Activated B cell treated with CpG ODN at 0.5 μM for 24 hours (primary cell): ENCODE measurements at regions of chr1 and their contacts with region 1.

Region 1: GRCh38 chr1:76154206-76154956 is 79.8 kb downstream of the ST6GALNAC3 start:
- DNase-seq: peak; percentile 60
- ATAC-seq: peak; percentile 91
- H3K4me3 Mint-ChIP-seq: peak overlapping the region; percentile 79
- H3K27ac Mint-ChIP-seq: peak overlapping the region; percentile 42
- H3K4me1 Mint-ChIP-seq: peaks cover 17% of the 10 kb centered on the region
- H3K27me3 Mint-ChIP-seq: peaks cover 4% of the 10 kb centered on the region
- CTCF ChIP-seq: peak; percentile 59

Region 2: GRCh38 chr1:76203132-76203531 is 48.8 kb after region 1 on chr1:
- CTCF ChIA-PET with region 1: no interaction called
- POLR2A ChIA-PET with region 1: no interaction called
- intact Hi-C with region 1: no loop called
- DNase-seq: no peak
- ATAC-seq: no peak
- H3K4me3 Mint-ChIP-seq: no peak overlapping the region
- H3K27ac Mint-ChIP-seq: no peak overlapping the region
- H3K4me1 Mint-ChIP-seq: no peaks in the 10 kb centered on the region
- H3K27me3 Mint-ChIP-seq: peaks cover 2% of the 10 kb centered on the region
- CTCF ChIP-seq: no peak

Region 3: DNA sequence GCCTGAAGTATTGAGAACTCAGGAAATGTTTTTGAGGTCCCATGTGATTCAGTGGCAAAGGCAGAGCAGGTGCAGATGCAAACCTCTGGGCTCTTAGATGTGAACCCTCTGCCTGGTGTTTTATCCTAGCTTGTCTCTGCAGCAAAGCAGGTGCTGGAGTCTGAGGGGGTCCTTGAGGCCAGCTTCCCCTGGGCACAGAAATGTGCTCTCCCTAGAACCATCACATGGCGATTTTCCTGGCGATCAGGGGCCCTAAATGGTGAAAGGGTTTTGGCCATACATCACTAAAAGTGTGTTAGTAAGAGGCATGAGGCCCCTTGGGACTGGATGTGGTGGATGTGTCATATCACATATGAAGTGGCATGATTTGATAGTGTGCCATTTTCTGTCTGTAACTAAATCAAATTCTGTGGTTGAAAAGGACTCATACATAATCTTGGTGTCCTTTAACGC is 65.0 kb after region 1 on chr1:
- CTCF ChIA-PET with region 1: interaction called, 6 read pairs
- POLR2A ChIA-PET with region 1: no interaction called
- intact Hi-C with region 1: loop called (anchors 1 kb)
- DNase-seq: peak; percentile 37
- ATAC-seq: peak; percentile 89
- H3K4me3 Mint-ChIP-seq: peak overlapping the region; percentile 56
- H3K27ac Mint-ChIP-seq: peak overlapping the region; percentile 90
- H3K4me1 Mint-ChIP-seq: peaks cover 23% of the 10 kb centered on the region
- H3K27me3 Mint-ChIP-seq: no peaks in the 10 kb centered on the region
- CTCF ChIP-seq: no peak

Region 4: GRCh38 chr1:76330991-76331603 is 176.7 kb after region 1 on chr1:
- CTCF ChIA-PET with region 1: interaction called, 8 read pairs
- POLR2A ChIA-PET with region 1: no interaction called
- intact Hi-C with region 1: loop called (anchors 1 kb)
- DNase-seq: no peak
- ATAC-seq: no peak
- H3K4me3 Mint-ChIP-seq: no peak overlapping the region
- H3K27ac Mint-ChIP-seq: no peak overlapping the region
- H3K4me1 Mint-ChIP-seq: peaks cover 3% of the 10 kb centered on the region
- H3K27me3 Mint-ChIP-seq: peaks cover 2% of the 10 kb centered on the region
- CTCF ChIP-seq: peak; percentile 95

Region 5: DNA sequence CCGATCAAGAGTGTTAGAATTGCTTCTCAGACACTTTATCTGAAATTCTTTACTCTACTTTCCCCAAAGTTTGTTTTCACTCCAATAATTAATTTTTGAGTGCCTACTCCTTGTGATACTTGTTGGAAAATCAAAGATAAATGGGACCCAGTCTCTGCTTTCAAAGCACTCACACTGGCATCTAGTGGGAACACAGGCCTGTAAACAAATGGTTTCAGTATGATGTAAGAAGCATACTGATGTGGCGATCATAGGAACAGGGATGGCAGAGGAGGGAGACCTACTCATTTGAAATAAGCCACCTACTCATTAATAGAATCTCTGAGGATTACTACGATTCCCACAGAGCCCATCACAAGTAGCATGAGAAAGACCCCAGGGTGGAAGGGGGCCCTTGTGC is 439.2 kb after region 1 on chr1:
- CTCF ChIA-PET with region 1: no interaction called
- POLR2A ChIA-PET with region 1: no interaction called
- intact Hi-C with region 1: no loop called
- DNase-seq: no peak
- ATAC-seq: no peak
- H3K4me3 Mint-ChIP-seq: no peak overlapping the region
- H3K27ac Mint-ChIP-seq: no peak overlapping the region
- H3K4me1 Mint-ChIP-seq: no peaks in the 10 kb centered on the region
- H3K27me3 Mint-ChIP-seq: no peaks in the 10 kb centered on the region
- CTCF ChIP-seq: no peak

Region 6: GRCh38 chr1:76901158-76901767 is 746.9 kb after region 1 on chr1:
- CTCF ChIA-PET with region 1: no interaction called
- POLR2A ChIA-PET with region 1: no interaction called
- intact Hi-C with region 1: loop called (anchors 1 kb)
- DNase-seq: no peak
- ATAC-seq: no peak
- H3K4me3 Mint-ChIP-seq: no peak overlapping the region
- H3K27ac Mint-ChIP-seq: no peak overlapping the region
- H3K4me1 Mint-ChIP-seq: no peaks in the 10 kb centered on the region
- H3K27me3 Mint-ChIP-seq: peaks cover 2% of the 10 kb centered on the region
- CTCF ChIP-seq: no peak

Region 7: GRCh38 chr1:77143529-77144121 is 989.2 kb after region 1 on chr1:
- CTCF ChIA-PET with region 1: interaction called, 5 read pairs
- POLR2A ChIA-PET with region 1: no interaction called
- intact Hi-C with region 1: loop called (anchors 1 kb)
- DNase-seq: no peak
- ATAC-seq: no peak
- H3K4me3 Mint-ChIP-seq: no peak overlapping the region
- H3K27ac Mint-ChIP-seq: no peak overlapping the region
- H3K4me1 Mint-ChIP-seq: no peaks in the 10 kb centered on the region
- H3K27me3 Mint-ChIP-seq: no peaks in the 10 kb centered on the region
- CTCF ChIP-seq: no peak

Region 8: DNA sequence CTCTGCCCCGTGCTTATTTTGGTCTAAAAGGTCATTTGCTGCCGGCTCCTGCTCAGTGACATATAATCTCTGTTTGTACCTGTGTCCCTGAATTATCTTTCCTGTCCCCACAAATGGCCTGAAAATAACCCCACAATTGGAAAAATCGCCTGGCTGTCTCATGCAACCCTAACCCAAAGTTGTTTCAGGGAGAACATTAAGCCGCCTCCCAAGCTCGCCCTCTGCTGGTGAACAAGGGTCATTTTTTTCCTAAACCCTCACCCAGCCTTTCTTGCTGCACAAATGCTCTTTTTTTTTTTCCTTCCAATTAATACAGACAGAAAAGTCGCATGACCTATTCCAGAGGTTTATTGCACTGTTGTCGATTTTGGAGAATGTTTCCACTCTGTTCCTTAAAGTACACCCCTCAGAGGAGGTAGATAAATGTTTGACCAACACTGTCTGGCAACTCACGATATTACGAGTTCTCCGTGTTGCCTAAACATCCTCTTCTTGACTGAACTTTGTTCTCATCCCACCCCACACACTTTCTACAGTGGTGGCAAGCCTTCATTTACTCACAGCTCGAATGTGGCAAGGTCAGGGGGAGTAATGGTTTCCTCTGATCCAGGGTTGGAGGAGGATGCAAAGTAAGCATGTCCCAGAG is 1379.4 kb after region 1 on chr1:
- CTCF ChIA-PET with region 1: interaction called, 4 read pairs
- POLR2A ChIA-PET with region 1: no interaction called
- intact Hi-C with region 1: loop called (anchors 1 kb)
- DNase-seq: no peak
- ATAC-seq: no peak
- H3K4me3 Mint-ChIP-seq: no peak overlapping the region
- H3K27ac Mint-ChIP-seq: no peak overlapping the region
- H3K4me1 Mint-ChIP-seq: peaks cover 4% of the 10 kb centered on the region
- H3K27me3 Mint-ChIP-seq: peaks cover 4% of the 10 kb centered on the region
- CTCF ChIP-seq: no peak